GM12878 (cell line): ENCODE measurements at regions of chr2 and their contacts with region 1.

Region 1: DNA sequence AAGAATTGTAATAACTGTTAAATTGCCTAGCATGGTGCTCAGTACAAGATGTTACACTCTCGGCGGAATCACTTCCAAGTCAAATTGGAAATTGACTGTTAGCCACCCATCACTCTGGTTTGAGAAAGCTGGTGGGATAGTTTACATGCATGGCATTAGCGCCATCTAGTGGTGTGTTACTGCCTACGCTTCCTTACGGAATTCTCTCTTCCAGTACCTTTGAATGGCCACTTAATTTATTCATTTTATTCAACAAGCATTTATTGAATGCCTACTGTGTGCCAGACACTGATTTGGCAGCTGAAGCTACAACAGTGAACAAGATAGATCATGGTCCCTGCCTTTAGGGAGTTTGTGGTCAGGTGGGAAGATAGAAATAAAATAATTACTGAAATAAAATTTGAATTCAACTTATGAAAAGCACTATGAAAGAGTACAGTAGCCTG is 171.2 kb downstream of the TMEM247 start:
- DNase-seq: peak; percentile 48
- ATAC-seq: peak; percentile 93
- H3K4me3 ChIP-seq: no peak overlapping the region
- H3K27ac ChIP-seq: no peak overlapping the region
- H3K4me1 ChIP-seq: no peaks in the 10 kb centered on the region
- H3K27me3 ChIP-seq: no peaks in the 10 kb centered on the region
- CTCF ChIP-seq: peak; percentile 84 to 94 (median 89)
- EP300 ChIP-seq: no peak
- POLR2A ChIP-seq: no peak
- RAD21 ChIP-seq: peak; percentile 93

Region 2: DNA sequence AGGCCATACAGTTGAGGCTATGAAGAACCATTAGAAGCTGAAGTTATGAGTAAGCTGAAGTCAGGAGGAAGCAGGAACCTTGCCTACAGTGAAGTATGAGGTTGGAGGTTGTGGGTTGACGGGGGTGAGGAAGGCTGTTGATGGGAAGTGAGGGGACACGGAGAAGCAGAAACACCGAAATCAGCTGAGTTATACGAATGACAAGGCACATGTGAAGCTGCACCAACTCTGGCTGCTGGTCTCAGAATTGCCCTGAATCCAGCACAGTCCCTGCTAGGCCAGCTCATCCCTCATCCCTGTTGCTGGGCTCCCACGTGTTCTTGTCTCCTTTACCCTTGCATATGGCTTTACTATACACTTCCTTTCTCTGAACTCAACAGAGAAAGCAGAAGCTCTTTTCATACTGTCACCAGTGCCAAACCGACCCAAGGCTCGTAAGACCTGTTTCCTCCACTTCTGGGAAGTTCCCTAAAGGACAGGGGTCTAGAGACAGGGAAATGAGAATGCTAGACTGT is 180.4 kb before region 1 on chr2:
- CTCF ChIA-PET with region 1: interaction called, 3 read pairs
- POLR2A ChIA-PET with region 1: interaction called, 5 read pairs
- RAD21 ChIA-PET with region 1: interaction called, 22 read pairs
- SMC1A ChIA-PET with region 1: no interaction called
- in situ Hi-C with region 1: no loop called
- intact Hi-C with region 1: no loop called
- DNase-seq: no peak
- ATAC-seq: peak; percentile 16; the same call in 2 of the 3 replicates
- H3K4me3 ChIP-seq: no peak overlapping the region
- H3K27ac ChIP-seq: no peak overlapping the region
- H3K4me1 ChIP-seq: no peaks in the 10 kb centered on the region
- H3K27me3 ChIP-seq: no peaks in the 10 kb centered on the region
- CTCF ChIP-seq: no peak
- EP300 ChIP-seq: no peak
- POLR2A ChIP-seq: no peak
- RAD21 ChIP-seq: no peak

Region 3: GRCh38 chr2:46589358-46589757 is 61.2 kb before region 1 on chr2:
- CTCF ChIA-PET with region 1: interaction called, 10 read pairs
- POLR2A ChIA-PET with region 1: no interaction called
- RAD21 ChIA-PET with region 1: interaction called, 4 read pairs
- SMC1A ChIA-PET with region 1: interaction called, 7 read pairs
- in situ Hi-C with region 1: no loop called
- intact Hi-C with region 1: no loop called
- DNase-seq: no peak
- ATAC-seq: no peak
- H3K4me3 ChIP-seq: no peak overlapping the region
- H3K27ac ChIP-seq: no peak overlapping the region
- H3K4me1 ChIP-seq: no peaks in the 10 kb centered on the region
- H3K27me3 ChIP-seq: no peaks in the 10 kb centered on the region
- CTCF ChIP-seq: no peak
- EP300 ChIP-seq: no peak
- POLR2A ChIP-seq: no peak
- RAD21 ChIP-seq: no peak

Region 4: DNA sequence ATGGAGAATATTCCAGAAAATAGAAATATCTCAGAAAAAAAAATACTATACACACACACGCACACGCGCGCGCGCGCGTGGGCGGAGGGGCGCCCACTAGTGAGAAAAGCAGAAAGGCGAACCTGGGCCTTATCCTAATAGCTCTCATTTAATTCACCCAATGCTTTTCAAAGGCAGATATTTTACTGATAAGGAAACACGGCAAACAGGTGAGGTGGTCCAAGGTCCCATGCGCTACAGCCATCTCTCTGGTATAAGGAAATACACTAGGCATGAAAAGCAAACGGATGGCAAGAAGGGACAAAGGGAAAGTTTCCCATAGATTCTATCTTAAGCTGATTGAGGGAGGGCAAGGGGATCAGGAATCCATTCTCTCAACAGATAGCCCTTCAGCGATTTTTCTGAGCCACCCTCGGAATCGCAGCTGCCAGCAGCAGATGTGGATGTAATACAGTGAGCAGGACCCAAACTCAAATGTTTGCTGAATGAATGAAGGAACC is 34.5 kb before region 1 on chr2:
- CTCF ChIA-PET with region 1: interaction called, 13 read pairs
- POLR2A ChIA-PET with region 1: interaction called, 3 read pairs
- RAD21 ChIA-PET with region 1: interaction called, 4 read pairs
- SMC1A ChIA-PET with region 1: interaction called, 3 read pairs
- in situ Hi-C with region 1: no loop called
- intact Hi-C with region 1: no loop called
- DNase-seq: no peak
- ATAC-seq: 0 out of 3 replicates have a peak, but pooled peaks have one; percentile 1
- H3K4me3 ChIP-seq: peak overlapping the region; percentile 86
- H3K27ac ChIP-seq: peak overlapping the region; percentile 77
- H3K4me1 ChIP-seq: peaks cover 14% of the 10 kb centered on the region
- H3K27me3 ChIP-seq: no peaks in the 10 kb centered on the region
- CTCF ChIP-seq: peak; percentile 14 to 31 (median 26); a peak in 4 of 6 replicates
- EP300 ChIP-seq: 0 out of 4 replicates have a peak, but pooled peaks of 1 of the 2 experiments have one; percentile 26
- POLR2A ChIP-seq: no peak
- RAD21 ChIP-seq: no peak

Region 5: DNA sequence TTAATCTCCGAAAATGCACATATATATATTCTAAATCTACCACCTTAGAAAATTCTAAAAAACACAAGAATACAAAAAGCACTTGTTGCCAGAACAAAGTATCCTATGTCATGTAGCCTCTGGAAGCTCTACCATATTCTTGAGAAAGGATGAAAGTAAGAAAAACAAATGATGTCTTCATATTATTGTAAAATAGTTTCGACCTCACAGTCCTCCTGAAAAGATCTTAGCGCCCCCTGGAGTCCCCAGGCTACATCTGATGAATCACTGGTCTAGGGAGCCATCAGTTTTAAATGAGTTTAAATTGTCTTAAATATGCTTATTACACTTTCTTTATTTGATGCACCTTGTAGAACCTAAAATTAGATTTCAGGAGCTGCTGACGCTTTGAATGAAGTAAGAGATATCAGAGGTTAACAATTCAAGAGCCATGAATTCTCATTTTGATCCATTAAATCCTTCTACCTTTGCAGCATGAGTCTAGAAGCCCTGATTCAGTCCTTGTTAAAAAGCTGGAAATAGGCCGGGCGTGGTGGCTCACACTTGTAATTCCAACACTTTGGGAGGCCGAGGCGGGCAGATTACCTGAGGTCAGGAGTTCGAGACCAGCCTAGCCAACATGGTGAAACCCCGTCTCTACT is 126.2 kb after region 1 on chr2:
- CTCF ChIA-PET with region 1: interaction called, 42 read pairs
- POLR2A ChIA-PET with region 1: no interaction called
- RAD21 ChIA-PET with region 1: interaction called, 9 read pairs
- SMC1A ChIA-PET with region 1: interaction called, 15 read pairs
- in situ Hi-C with region 1: loop called (anchors 10 kb)
- intact Hi-C with region 1: no loop called
- DNase-seq: no peak
- ATAC-seq: peak; percentile 87
- H3K4me3 ChIP-seq: no peak overlapping the region
- H3K27ac ChIP-seq: no peak overlapping the region
- H3K4me1 ChIP-seq: no peaks in the 10 kb centered on the region
- H3K27me3 ChIP-seq: no peaks in the 10 kb centered on the region
- CTCF ChIP-seq: peak; percentile 67 to 74 (median 71)
- EP300 ChIP-seq: no peak
- POLR2A ChIP-seq: no peak
- RAD21 ChIP-seq: peak; percentile 83